HepG2 (cell line): ENCODE measurements at regions of chr7 and their contacts with region 1.

Region 1: DNA sequence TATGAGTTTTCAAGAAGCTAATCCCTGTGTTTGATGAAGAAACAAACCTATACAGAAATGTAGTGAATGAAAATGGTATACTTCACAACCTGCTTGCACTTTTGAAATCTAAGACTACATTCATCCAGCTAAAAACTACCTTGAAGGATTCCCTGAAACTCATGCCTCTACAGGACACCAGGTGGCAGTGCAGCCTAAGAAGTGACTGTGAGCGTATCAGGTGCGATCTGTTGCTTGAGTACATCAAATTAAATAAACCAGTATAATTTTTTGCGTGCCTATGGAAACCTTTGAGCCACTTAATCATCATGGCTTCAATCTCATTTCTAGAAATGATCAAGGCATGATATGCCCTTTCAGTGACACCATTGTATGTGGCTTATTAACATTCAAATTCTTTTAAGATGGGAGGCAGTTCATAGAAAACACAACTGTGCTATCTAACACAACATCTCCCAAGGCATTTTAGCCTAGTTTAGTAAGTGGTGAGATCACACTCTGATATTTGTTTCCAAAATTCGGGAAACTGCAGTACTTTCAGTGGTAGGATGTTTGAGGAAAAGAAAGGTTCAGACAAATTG is 57.4 kb downstream of the PPP1R17 start:
- DNase-seq: peak; percentile 49
- ATAC-seq: peak; percentile 75
- H3K4me3 ChIP-seq: no peak overlapping the region
- H3K27ac ChIP-seq: no peak overlapping the region
- H3K4me1 ChIP-seq: no peaks in the 10 kb centered on the region
- H3K27me3 ChIP-seq: no peaks in the 10 kb centered on the region
- CTCF ChIP-seq: peak; percentile 81
- EP300 ChIP-seq: no peak
- POLR2A ChIP-seq: no peak
- RAD21 ChIP-seq: peak; percentile 47; the same call in 1 of the 2 replicates

Region 2: GRCh38 chr7:30983042-30983913 is 761.1 kb before region 1 on chr7:
- CTCF ChIA-PET with region 1: no interaction called
- POLR2A ChIA-PET with region 1: no interaction called
- in situ Hi-C with region 1: loop called (anchors 25 kb)
- intact Hi-C with region 1: no loop called
- DNase-seq: peak; percentile 39
- ATAC-seq: peak; percentile 94
- H3K4me3 ChIP-seq: no peak overlapping the region
- H3K27ac ChIP-seq: no peak overlapping the region
- H3K4me1 ChIP-seq: no peaks in the 10 kb centered on the region
- H3K27me3 ChIP-seq: peaks cover 0 to 7% of the 10 kb centered on the region in 2 experiments; a peak in 1 of 5 replicates
- CTCF ChIP-seq: peak; percentile 96
- EP300 ChIP-seq: no peak
- POLR2A ChIP-seq: no peak
- RAD21 ChIP-seq: peak; percentile 80

Region 3: GRCh38 chr7:32062150-32062549 is 317.8 kb after region 1 on chr7:
- CTCF ChIA-PET with region 1: interaction called, 9 read pairs
- POLR2A ChIA-PET with region 1: no interaction called
- in situ Hi-C with region 1: no loop called
- intact Hi-C with region 1: loop called (anchors 1 kb)
- DNase-seq: peak; percentile 16
- ATAC-seq: peak; percentile 78
- H3K4me3 ChIP-seq: no peak overlapping the region
- H3K27ac ChIP-seq: no peak overlapping the region
- H3K4me1 ChIP-seq: no peaks in the 10 kb centered on the region
- H3K27me3 ChIP-seq: no peaks in the 10 kb centered on the region; a peak in 1 of 5 replicates
- CTCF ChIP-seq: peak; percentile 59
- EP300 ChIP-seq: no peak
- POLR2A ChIP-seq: no peak
- RAD21 ChIP-seq: no peak

Region 4: DNA sequence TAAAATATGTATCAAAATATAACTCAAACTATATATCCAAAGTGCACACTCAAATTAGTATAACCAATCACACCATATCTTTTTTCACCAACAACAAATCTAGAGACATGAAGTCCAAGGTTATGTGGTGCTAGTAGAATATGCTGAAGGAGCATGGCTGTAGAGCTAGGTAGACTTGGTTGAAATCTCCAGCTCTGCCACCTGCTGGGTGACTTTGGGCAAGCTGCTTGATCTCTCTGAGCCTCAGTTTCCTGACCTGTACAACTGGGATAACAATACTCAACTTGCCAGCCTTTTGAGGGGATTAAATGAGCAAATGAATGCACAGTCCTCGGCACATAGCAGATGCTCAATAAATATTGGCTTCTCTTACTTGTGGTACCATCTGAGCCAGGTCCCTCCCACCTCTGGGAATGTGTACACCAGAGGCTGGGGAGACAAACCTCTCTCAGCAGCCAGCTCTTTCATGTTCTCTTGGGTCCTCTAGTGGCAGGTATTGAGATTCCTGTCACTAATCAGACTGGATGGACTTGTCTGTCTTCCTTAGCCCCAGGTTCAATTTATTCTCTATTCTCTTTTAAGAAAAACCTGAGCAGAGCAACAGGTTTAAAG is 420.1 kb after region 1 on chr7:
- CTCF ChIA-PET with region 1: no interaction called
- POLR2A ChIA-PET with region 1: no interaction called
- in situ Hi-C with region 1: no loop called
- intact Hi-C with region 1: loop called (anchors 1 kb)
- DNase-seq: peak; percentile 43
- ATAC-seq: peak; percentile 90
- H3K4me3 ChIP-seq: no peak overlapping the region
- H3K27ac ChIP-seq: no peak overlapping the region
- H3K4me1 ChIP-seq: no peaks in the 10 kb centered on the region
- H3K27me3 ChIP-seq: no peaks in the 10 kb centered on the region; a peak in 1 of 5 replicates
- CTCF ChIP-seq: peak; percentile 58
- EP300 ChIP-seq: no peak
- POLR2A ChIP-seq: no peak
- RAD21 ChIP-seq: no peak

Region 5: GRCh38 chr7:32204361-32205018 is 460.1 kb after region 1 on chr7:
- CTCF ChIA-PET with region 1: interaction called, 18 read pairs
- POLR2A ChIA-PET with region 1: no interaction called
- in situ Hi-C with region 1: loop called (anchors 5 kb)
- intact Hi-C with region 1: loop called (anchors 1 kb)
- DNase-seq: peak; percentile 65
- ATAC-seq: peak; percentile 96
- H3K4me3 ChIP-seq: no peak overlapping the region
- H3K27ac ChIP-seq: no peak overlapping the region
- H3K4me1 ChIP-seq: no peaks in the 10 kb centered on the region
- H3K27me3 ChIP-seq: peaks cover 0 to 7% of the 10 kb centered on the region in 2 experiments; a peak in 1 of 5 replicates
- CTCF ChIP-seq: peak; percentile 77
- EP300 ChIP-seq: no peak
- POLR2A ChIP-seq: no peak
- RAD21 ChIP-seq: peak; percentile 76

Region 6: GRCh38 chr7:32347244-32347828 is 603.0 kb after region 1 on chr7:
- CTCF ChIA-PET with region 1: no interaction called
- POLR2A ChIA-PET with region 1: no interaction called
- in situ Hi-C with region 1: no loop called
- intact Hi-C with region 1: loop called (anchors 2 kb)
- DNase-seq: peak; percentile 5
- ATAC-seq: no peak
- H3K4me3 ChIP-seq: no peak overlapping the region
- H3K27ac ChIP-seq: no peak overlapping the region
- H3K4me1 ChIP-seq: no peaks in the 10 kb centered on the region
- H3K27me3 ChIP-seq: no peaks in the 10 kb centered on the region
- CTCF ChIP-seq: peak; percentile 51
- EP300 ChIP-seq: no peak
- POLR2A ChIP-seq: no peak
- RAD21 ChIP-seq: no peak

Region 7: DNA sequence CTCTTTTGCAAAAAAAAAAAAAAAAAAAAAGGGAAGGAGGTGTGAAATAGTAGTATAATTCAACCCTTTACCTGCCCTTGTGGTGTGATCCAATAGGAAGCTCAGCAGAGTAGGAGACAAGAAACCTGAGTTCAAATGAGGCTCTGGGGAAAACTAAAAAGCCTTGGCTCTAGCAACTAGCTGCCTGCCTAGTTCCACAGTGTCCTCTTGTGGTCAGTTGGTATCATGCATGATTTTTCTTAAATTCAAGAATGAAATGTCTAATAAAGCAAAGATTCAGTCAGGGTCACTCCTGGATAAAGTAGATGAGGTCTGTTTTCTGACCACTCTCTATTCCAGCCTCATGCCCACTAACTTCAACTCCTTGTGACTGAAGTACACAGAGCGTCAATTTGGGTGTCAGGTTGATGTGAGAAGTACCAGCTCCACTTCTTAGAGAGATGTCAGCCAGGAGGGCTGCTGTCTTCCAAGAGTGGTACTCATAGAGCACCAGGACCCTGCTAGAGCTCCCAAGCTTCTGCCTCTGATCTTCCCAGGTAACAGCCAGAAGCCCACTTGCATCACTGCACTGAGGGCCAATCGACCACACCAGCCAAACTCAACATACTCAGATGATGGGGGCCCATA is 735.3 kb after region 1 on chr7:
- CTCF ChIA-PET with region 1: interaction called, 4 read pairs
- POLR2A ChIA-PET with region 1: no interaction called
- in situ Hi-C with region 1: loop called (anchors 10 kb)
- intact Hi-C with region 1: loop called (anchors 1 kb)
- DNase-seq: peak; percentile 54
- ATAC-seq: peak; percentile 49; the same call in 2 of the 3 replicates
- H3K4me3 ChIP-seq: no peak overlapping the region
- H3K27ac ChIP-seq: no peak overlapping the region
- H3K4me1 ChIP-seq: no peaks in the 10 kb centered on the region
- H3K27me3 ChIP-seq: no peaks in the 10 kb centered on the region
- CTCF ChIP-seq: peak; percentile 85
- EP300 ChIP-seq: no peak
- POLR2A ChIP-seq: no peak
- RAD21 ChIP-seq: peak; percentile 62